GM12878 (cell line): ENCODE measurements at regions of chr11 and their contacts with region 1.

Region 1: DNA sequence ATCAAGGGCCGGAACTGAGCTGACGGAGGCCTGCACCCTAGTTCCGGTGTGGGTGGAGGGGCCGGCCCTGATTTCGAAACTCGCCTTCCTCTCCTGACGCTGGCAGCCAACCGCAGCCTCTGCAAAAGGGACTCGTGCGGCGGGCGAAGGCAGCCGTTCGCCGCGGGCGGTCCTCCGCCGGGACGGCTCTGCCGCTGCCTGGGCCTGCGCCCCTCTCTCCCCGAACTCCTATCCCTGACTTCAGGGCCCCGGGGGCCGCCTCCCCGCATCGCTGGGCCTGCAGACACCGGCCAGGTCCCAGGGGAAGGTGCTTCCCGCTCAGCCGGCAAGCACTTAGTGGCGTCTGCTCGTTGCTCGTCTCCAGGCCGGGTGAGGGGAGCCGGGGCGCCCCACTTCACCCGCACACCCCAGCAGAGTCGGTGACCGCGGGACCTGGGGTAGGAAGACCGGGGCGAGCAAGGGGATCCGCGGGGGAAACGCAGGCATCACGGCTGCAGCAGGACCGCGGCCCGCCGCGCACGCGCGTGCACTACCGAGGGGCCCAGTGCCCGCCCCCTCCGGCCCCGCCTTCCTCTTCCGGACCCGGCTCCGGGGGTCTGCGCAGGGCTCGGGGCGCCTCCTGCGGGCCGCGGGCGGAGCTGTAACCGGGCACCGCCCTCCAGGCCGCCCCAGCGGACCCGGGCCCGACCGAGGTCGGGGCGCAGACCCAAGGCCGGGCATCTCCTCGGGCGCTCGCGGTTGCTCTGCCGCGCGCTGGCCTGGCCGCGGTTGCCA is 464 bp upstream of the ANKRD13D start:
- DNase-seq: peak; percentile 61
- ATAC-seq: peak; percentile 88
- H3K4me3 ChIP-seq: peak overlapping the region; percentile 97
- H3K27ac ChIP-seq: peak overlapping the region; percentile 99
- H3K4me1 ChIP-seq: peaks cover 26% of the 10 kb centered on the region
- H3K27me3 ChIP-seq: no peaks in the 10 kb centered on the region
- CTCF ChIP-seq: peak in 2 of 3 experiments; percentile 24 to 75; a peak in 4 of 6 replicates
- EP300 ChIP-seq: peak; percentile 17 to 67; a peak in 1 of 4 replicates
- POLR2A ChIP-seq: peak; percentile 93
- RAD21 ChIP-seq: peak; percentile 68

Region 2: DNA sequence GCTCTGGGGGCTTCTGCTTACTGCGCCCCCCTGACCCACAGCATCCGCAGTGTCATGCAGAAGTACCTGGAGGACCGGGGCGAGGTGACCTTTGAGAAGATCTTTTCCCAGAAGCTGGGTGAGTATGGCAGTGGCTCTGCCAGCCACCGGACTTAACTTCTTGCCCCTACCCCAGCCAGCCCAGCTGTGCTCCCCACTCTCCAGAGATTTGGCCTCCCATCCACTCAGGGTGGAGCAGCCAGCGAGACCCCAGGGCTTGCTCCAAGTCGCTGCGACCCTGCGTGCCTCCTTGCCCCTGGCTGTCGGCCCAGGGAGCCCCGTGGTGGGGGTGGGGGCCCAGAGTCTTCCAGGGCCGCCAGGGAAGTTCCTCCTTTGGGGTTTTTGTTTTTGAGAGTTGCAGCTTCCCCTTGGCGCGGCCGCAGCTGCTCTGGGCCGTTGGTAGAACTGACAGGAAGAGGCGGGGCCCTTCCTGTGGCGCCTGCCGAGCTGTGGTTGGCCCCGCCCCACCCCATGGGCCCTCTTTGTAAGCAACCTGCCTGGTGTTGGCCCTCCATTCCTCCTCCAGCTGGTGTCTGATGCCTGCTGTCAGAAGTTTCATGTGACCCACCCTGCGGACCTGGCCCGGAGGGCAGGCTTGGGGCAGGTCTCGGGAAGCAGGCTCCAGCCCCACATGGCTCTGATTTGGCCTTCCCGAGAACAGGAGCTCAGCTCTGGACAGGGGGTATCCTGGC is 11.2 kb before region 1 on chr11:
- CTCF ChIA-PET with region 1: interaction called, 18 read pairs
- POLR2A ChIA-PET with region 1: interaction called, 25 read pairs
- RAD21 ChIA-PET with region 1: interaction called, 13 read pairs
- SMC1A ChIA-PET with region 1: interaction called, 35 read pairs
- in situ Hi-C with region 1: no loop called
- intact Hi-C with region 1: loop called (anchors 1 kb)
- DNase-seq: peak; percentile 66
- ATAC-seq: peak; percentile 95
- H3K4me3 ChIP-seq: peak overlapping the region; percentile 57; the same call in 1 of the 2 replicates
- H3K27ac ChIP-seq: peak overlapping the region; percentile 99
- H3K4me1 ChIP-seq: peaks cover 47% of the 10 kb centered on the region
- H3K27me3 ChIP-seq: no peaks in the 10 kb centered on the region
- CTCF ChIP-seq: no peak
- EP300 ChIP-seq: peak; percentile 48 to 76; a peak in 3 of 4 replicates
- POLR2A ChIP-seq: peak; percentile 83
- RAD21 ChIP-seq: no peak

Region 3: GRCh38 chr11:67371212-67371910 is 82.7 kb after region 1 on chr11:
- CTCF ChIA-PET with region 1: no interaction called
- POLR2A ChIA-PET with region 1: no interaction called
- RAD21 ChIA-PET with region 1: no interaction called
- SMC1A ChIA-PET with region 1: no interaction called
- in situ Hi-C with region 1: no loop called
- intact Hi-C with region 1: no loop called
- DNase-seq: no peak
- ATAC-seq: peak; percentile 67
- H3K4me3 ChIP-seq: no peak overlapping the region
- H3K27ac ChIP-seq: no peak overlapping the region
- H3K4me1 ChIP-seq: peaks cover 25% of the 10 kb centered on the region
- H3K27me3 ChIP-seq: peaks cover 2 to 9% of the 10 kb centered on the region in 2 experiments; a peak in 3 of 4 replicates
- CTCF ChIP-seq: peak; percentile 51 to 57 (median 52)
- EP300 ChIP-seq: no peak
- POLR2A ChIP-seq: no peak
- RAD21 ChIP-seq: 0 out of 2 replicates have a peak, but pooled peaks have one; percentile 22